ENCODE measurements at regions of chr1 and their contacts with region 1.

Region 1: GRCh38 chr1:97524211-97524610 is 396.6 kb downstream of the DPYD start:
- DNase-seq: no peak
- ATAC-seq: no peak
- H3K4me3 ChIP-seq: no peak overlapping the region
- H3K4me3 Mint-ChIP-seq: no peak overlapping the region
- H3K27ac ChIP-seq: no peak overlapping the region
- H3K27ac Mint-ChIP-seq: no peak overlapping the region
- H3K4me1 ChIP-seq: no peaks in the 10 kb centered on the region
- H3K4me1 Mint-ChIP-seq: peaks cover 0 to 5% (median 0%) of the 10 kb centered on the region in 3 donors
- H3K27me3 ChIP-seq: no peaks in the 10 kb centered on the region
- H3K27me3 Mint-ChIP-seq: no peaks in the 10 kb centered on the region

Region 2: DNA sequence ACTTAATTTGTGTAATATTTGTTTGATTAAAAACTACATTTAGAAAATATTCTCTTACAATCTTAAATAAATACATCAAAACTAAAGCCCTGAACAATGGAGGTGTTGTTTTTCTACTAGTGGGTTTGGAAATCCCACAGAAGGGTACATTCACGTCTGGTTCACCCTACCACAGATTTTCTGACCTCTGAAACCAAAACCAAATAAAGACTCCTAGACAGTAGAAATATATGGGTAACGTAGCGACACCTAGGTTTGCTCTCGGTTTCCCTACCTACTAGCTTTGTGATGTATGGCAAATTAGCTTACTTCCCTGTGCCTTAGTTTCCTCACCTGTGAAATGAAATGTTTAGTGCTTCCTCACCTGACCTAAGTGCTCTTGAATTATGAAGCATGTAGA is 84.1 kb after region 1 on chr1:
- CTCF ChIA-PET with region 1: no interaction called
- POLR2A ChIA-PET with region 1: no interaction called
- DNase-seq: no peak
- ATAC-seq: no peak
- H3K4me3 ChIP-seq: no peak overlapping the region
- H3K4me3 Mint-ChIP-seq: no peak overlapping the region
- H3K27ac ChIP-seq: no peak overlapping the region
- H3K27ac Mint-ChIP-seq: no peak overlapping the region
- H3K4me1 ChIP-seq: no peaks in the 10 kb centered on the region
- H3K4me1 Mint-ChIP-seq: peaks cover 0 to 10% (median 2%) of the 10 kb centered on the region in 3 donors
- H3K27me3 ChIP-seq: no peaks in the 10 kb centered on the region
- H3K27me3 Mint-ChIP-seq: no peaks in the 10 kb centered on the region

Region 3: DNA sequence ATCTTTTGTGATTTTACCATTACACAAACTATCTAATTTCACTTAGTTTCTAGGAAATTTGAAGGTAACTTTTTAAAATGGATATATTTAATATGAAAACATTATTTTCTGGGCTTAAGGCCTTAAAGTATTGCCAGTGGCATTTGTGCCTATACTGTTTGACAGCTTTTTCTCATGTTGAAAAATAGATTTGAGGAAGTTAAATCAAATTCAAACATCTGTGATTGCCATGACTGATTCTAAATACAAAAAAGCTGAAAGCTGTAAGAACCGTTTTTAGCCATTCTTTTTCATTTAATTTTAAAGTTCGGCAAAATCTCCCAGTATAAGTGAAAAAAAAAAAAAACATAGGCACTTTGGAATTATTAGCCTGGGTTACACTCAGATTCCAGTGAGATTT is 95.5 kb after region 1 on chr1:
- CTCF ChIA-PET with region 1: no interaction called
- POLR2A ChIA-PET with region 1: interaction called in 1 of 2 experiments, 10 read pairs
- DNase-seq: no peak
- ATAC-seq: no peak
- H3K4me3 ChIP-seq: no peak overlapping the region
- H3K4me3 Mint-ChIP-seq: no peak overlapping the region
- H3K27ac ChIP-seq: no peak overlapping the region
- H3K27ac Mint-ChIP-seq: no peak overlapping the region
- H3K4me1 ChIP-seq: no peaks in the 10 kb centered on the region
- H3K4me1 Mint-ChIP-seq: peaks cover 0 to 5% (median 2%) of the 10 kb centered on the region in 3 donors
- H3K27me3 ChIP-seq: no peaks in the 10 kb centered on the region
- H3K27me3 Mint-ChIP-seq: no peaks in the 10 kb centered on the region